ENCODE measurements at regions of chr6 and their contacts with region 1.

Region 1: DNA sequence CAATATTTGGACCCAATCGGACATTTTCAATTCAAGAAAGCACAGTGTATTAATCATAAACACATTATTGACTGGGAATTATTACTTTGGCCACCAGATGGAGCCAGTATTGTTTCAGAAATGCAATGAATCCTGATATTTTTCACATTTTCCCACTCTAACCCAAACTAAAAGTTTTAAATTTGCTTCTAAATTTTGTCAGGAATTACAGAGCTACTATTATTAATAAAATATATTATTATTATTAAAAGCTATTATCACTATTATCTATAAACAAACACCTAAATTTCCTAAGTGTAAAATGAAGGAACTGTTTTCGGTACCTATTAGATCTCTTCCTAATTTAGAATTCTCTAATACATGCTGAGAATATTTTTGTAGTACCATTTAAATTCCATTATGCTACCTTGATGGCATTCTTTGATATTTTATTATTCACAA is 245.3 kb downstream of the OGFRL1 start:
- DNase-seq: no peak
- H3K4me3 ChIP-seq: no peak overlapping the region
- H3K27ac ChIP-seq: no peak overlapping the region
- H3K4me1 ChIP-seq: no peaks in the 10 kb centered on the region
- H3K27me3 ChIP-seq: no peaks in the 10 kb centered on the region
- CTCF ChIP-seq: peak; percentile 75

Region 2: DNA sequence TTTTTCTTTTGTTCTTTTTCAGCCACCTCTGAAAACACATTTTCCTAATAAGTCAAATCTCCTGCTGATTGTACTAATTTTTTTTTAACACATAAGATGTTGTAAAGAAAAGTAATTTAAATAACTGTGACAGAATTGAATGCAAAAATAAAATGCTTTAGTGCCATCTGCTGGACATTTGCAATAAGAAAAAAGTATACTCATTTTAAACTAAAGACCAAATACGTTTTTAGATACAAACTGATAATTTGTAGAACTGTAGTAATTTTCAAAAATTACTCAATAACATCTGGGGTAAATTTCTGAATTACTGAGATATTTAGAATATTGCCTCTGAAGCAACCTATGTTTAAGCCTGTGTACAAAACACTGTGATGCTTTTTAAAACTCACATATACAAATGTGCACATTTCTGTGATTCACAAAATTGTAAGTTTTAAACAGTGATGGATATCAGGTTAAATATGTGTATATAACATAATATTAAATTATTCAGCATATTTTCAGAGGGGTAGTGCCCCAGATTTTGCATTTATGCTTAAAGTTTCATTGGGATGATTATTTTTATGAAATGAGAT is 551.1 kb after region 1 on chr6:
- intact Hi-C with region 1: loop called (anchors 5 kb)
- DNase-seq: no peak
- H3K4me3 ChIP-seq: no peak overlapping the region
- H3K27ac ChIP-seq: no peak overlapping the region
- H3K4me1 ChIP-seq: no peaks in the 10 kb centered on the region
- H3K27me3 ChIP-seq: peaks cover 10% of the 10 kb centered on the region
- CTCF ChIP-seq: peak; percentile 60